ENCODE measurements at regions of chr15 and their contacts with region 1.

Region 1: DNA sequence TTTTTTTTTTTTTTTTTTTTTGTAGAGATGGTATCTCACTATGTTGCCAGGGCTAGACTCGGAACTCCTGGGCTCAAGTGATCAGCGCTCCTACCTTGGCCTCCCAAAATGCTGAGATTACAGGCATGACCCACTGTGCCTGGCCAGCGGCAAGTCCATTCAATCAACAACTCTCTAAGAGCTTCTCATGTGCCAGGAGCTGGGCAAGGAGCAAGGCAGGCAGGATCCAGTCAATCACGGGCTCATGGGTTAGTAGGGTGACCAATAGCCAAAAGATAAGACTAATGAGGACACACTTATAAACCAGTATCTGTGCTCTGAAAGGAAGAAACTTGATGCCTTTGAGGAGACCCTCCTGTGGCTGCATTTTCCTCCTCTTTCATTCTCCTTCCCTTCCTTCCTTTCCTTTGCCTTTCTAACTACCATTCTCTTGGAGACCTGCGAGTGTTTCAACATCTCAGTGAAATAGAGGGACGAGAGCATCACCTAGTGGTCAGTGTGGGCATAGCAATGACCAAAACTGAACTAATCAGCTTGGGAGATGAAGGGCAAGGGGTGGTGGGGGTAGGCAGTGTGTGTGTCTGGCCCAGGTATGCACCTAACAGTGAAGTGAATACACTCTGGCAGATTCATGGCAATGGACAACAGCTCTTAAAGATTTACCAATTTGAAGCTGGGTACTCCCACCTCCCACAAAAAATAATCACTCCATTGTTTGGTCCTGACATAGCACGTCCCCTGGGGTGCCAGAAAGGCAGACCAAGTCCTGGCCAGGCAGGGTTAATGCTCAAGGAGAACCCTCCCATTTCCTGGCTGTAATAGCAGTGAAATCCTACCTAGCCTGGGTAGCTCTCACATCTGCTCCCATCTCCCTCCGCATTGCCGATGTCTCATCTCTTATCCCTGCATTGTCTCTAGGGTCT is 6.2 kb downstream of the RPP25 start:
- DNase-seq: peak; percentile 85
- ATAC-seq: peak; percentile 88
- H3K4me3 Mint-ChIP-seq: no peak overlapping the region
- H3K27ac Mint-ChIP-seq: no peak overlapping the region
- H3K4me1 Mint-ChIP-seq: peaks cover 11% of the 10 kb centered on the region
- H3K27me3 Mint-ChIP-seq: peaks cover 6% of the 10 kb centered on the region

Region 2: DNA sequence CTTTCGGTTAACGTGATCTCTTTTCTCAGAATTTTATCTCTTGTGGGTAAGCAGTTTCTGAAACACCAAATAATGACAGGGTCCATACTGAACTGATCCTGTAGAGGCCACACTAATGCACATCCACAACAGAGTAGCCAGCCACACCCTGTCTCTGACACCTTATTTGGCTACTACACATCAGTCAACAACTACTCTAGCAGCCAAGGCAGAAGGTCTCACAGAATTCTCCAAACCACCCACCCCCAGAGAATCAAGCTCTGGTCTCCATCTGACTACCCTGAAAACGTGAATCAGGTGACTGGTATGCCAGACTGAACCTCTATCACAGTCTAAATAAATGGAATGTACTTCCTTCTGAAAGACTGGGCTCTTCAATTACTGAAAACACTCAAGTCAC is 292.5 kb before region 1 on chr15:
- CTCF ChIA-PET with region 1: no interaction called
- POLR2A ChIA-PET with region 1: no interaction called
- DNase-seq: no peak
- ATAC-seq: no peak
- H3K4me3 Mint-ChIP-seq: no peak overlapping the region
- H3K27ac Mint-ChIP-seq: peak overlapping the region; percentile 44
- H3K4me1 Mint-ChIP-seq: peaks cover 30% of the 10 kb centered on the region
- H3K27me3 Mint-ChIP-seq: no peaks in the 10 kb centered on the region

Region 3: GRCh38 chr15:74937596-74938296 is 12.6 kb before region 1 on chr15 and contains the start of gene COX5A:
- CTCF ChIA-PET with region 1: interaction called, 18 read pairs
- POLR2A ChIA-PET with region 1: interaction called, 4 read pairs
- DNase-seq: peak; percentile 95
- ATAC-seq: peak; percentile 97
- H3K4me3 Mint-ChIP-seq: peak within 1 kb of the TSS; percentile 91
- H3K27ac Mint-ChIP-seq: peak within 1 kb of the TSS; percentile 92
- H3K4me1 Mint-ChIP-seq: peaks cover 41% of the 10 kb centered on the region
- H3K27me3 Mint-ChIP-seq: peaks cover 2% of the 10 kb centered on the region
- total RNA-seq, gene COX5A: 305 to 313 TPM

Region 4: DNA sequence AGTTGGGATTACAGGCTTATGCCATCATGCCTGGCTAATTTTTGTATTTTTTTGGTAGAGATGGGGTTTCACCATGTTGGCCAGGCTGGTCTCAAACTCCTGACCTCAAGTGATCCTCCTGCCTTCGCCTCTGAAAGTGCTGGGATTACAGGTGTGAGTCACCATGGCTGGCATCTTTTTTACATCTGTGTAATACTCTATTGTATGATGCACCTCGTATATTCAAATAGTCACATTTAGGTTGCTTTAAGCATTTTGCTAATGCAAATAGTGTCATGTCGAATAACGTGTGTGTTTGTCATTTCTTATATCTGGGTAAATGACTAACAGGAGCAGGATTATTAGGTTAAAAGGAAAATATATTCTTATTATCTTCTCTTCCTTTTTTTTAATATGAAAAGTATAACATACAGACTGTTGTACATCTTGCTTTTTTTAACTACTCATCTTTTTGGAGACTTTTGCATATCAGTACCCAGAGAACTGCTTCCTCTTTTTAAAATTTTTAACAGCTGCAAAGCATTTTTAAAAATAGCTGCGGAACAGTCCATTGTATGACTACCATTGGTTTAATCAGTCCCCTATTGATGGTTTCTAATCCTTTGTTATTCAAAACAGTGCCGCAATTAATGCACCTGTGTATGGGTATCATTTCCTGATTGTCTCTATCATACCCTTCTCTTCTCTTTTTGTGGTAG is 58.4 kb after region 1 on chr15:
- CTCF ChIA-PET with region 1: no interaction called
- POLR2A ChIA-PET with region 1: no interaction called
- DNase-seq: no peak
- ATAC-seq: no peak
- H3K4me3 Mint-ChIP-seq: no peak overlapping the region
- H3K27ac Mint-ChIP-seq: no peak overlapping the region
- H3K4me1 Mint-ChIP-seq: peaks cover 7% of the 10 kb centered on the region
- H3K27me3 Mint-ChIP-seq: peaks cover 17% of the 10 kb centered on the region

Region 5: DNA sequence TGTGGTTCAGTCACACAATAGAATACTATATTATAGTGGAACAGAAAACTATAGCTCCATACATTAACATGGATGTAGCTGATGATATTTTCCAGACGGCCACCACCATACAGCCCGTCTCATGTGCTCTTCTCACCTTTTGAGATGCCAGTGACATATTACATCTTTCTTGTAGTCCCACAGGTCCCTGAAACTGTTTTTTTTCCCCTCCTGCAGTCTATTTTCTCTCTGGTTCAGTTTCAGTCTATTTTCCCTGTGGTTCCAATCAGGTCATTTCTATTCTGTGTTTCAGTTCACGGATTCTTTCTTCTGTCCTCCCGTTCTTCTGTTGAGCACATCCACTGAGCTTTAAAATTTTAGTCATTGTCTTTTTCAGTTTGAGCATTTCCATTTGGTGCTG is 145.3 kb after region 1 on chr15:
- CTCF ChIA-PET with region 1: no interaction called
- POLR2A ChIA-PET with region 1: no interaction called
- DNase-seq: no peak
- ATAC-seq: no peak
- H3K4me3 Mint-ChIP-seq: no peak overlapping the region
- H3K27ac Mint-ChIP-seq: no peak overlapping the region
- H3K4me1 Mint-ChIP-seq: peaks cover 12% of the 10 kb centered on the region
- H3K27me3 Mint-ChIP-seq: peaks cover 6% of the 10 kb centered on the region

Region 6: GRCh38 chr15:75436861-75437260 is 486.5 kb after region 1 on chr15:
- CTCF ChIA-PET with region 1: no interaction called
- POLR2A ChIA-PET with region 1: no interaction called
- DNase-seq: no peak
- ATAC-seq: no peak
- H3K4me3 Mint-ChIP-seq: no peak overlapping the region
- H3K27ac Mint-ChIP-seq: no peak overlapping the region
- H3K4me1 Mint-ChIP-seq: peaks cover 23% of the 10 kb centered on the region
- H3K27me3 Mint-ChIP-seq: no peaks in the 10 kb centered on the region

Measured in activated CD8-positive, alpha-beta T cell treated with anti-CD3 and anti-CD28 coated beads, Interleukin-2, amount 10 ng/mL, durations not matched to agents 7 days and 5 days (primary cell).